SK-N-SH (cell line): ENCODE measurements at regions of chr15 and their contacts with region 1.

Region 1: GRCh38 chr15:38563723-38564519 is 693 bp downstream of the RASGRP1 start:
- DNase-seq: peak; percentile 85
- H3K4me3 ChIP-seq: peak overlapping the region; percentile 56 to 63
- H3K27ac ChIP-seq: no peak overlapping the region
- H3K4me1 ChIP-seq: peaks cover 0 to 16% of the 10 kb centered on the region in 2 experiments; a peak in 1 of 4 replicates
- H3K27me3 ChIP-seq: peaks cover 6% of the 10 kb centered on the region; the same call in 1 of the 2 replicates
- CTCF ChIP-seq: peak; percentile 87
- EP300 ChIP-seq: no peak
- RAD21 ChIP-seq: peak; percentile 51

Region 2: DNA sequence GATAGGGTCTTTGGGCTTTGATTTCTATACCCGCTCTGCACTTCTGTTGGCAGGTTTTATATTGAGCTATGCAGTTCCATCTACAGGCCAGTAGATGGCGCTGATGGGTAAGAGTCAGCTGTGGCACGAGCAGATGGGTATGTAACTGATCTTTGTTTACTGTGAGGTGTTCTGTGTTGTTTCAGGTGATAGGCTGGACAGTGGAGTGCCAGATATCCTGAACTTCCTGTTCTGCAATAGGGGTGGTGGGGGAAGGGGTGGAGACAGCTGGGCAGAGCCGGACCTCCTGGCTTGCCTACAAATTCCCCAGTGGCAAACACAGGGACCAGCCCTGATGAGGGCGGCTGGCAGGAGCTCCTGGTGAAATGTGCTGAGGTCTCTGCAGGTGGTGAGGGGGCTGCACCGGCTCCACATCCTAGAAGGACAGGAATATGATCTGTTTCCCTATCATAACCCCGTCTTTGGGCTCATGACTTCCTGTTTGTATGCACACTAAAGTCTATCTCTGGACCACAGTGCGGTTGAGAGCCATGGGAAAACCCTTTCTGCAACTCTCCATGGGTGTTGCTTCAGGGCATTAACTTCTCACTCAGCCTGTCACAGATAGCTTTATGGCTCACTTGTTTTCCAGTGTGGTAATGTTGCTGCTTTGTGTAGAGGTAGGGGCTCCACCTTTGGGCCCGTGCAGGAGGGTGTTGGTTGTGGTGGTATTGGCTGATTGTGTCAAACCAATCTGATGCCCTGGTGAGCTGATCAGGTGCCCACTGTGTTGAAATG is 123.4 kb before region 1 on chr15:
- CTCF ChIA-PET with region 1: interaction called, 16 read pairs
- POLR2A ChIA-PET with region 1: no interaction called
- DNase-seq: peak; percentile 58
- H3K4me3 ChIP-seq: no peak overlapping the region; a peak in 1 of 4 replicates
- H3K27ac ChIP-seq: no peak overlapping the region; a peak in 1 of 4 replicates
- H3K4me1 ChIP-seq: peaks cover 0 to 7% of the 10 kb centered on the region in 2 experiments; a peak in 1 of 4 replicates
- H3K27me3 ChIP-seq: 0 out of 2 replicates have a peak, but pooled peaks cover 9% of the 10 kb centered on the region
- CTCF ChIP-seq: peak; percentile 94
- EP300 ChIP-seq: no peak
- RAD21 ChIP-seq: peak; percentile 88

Region 3: DNA sequence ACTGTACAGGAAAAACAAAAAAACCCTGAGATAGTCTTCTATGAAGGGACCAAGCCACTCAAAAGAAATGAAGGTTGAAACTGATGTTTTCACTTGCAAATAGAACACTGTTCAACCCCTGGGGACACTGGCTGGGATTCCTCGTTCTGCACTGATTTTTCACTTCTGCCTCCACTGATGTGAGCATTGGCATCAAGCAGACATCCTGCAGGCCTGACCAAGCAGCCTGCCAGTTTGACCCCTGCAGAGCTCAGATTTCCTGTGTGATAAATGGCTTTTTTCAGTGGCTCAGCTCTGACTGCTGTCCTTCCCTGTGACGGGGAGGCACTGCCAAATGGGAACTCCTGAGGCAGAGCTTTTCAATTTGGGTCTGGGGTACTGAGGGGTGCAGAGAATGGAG is 49.3 kb before region 1 on chr15:
- CTCF ChIA-PET with region 1: interaction called, 18 read pairs
- POLR2A ChIA-PET with region 1: no interaction called
- DNase-seq: peak; percentile 50
- H3K4me3 ChIP-seq: no peak overlapping the region
- H3K27ac ChIP-seq: peak overlapping the region in 1 of 2 experiments; percentile 82; a peak in 2 of 4 replicates
- H3K4me1 ChIP-seq: peaks cover 10 to 20% of the 10 kb centered on the region in 2 experiments; a peak in 3 of 4 replicates
- H3K27me3 ChIP-seq: no peaks in the 10 kb centered on the region
- CTCF ChIP-seq: no peak
- EP300 ChIP-seq: peak in 1 of 2 experiments; percentile 48; a peak in 2 of 4 replicates
- RAD21 ChIP-seq: peak; percentile 9; the same call in 1 of the 2 replicates

Region 4: DNA sequence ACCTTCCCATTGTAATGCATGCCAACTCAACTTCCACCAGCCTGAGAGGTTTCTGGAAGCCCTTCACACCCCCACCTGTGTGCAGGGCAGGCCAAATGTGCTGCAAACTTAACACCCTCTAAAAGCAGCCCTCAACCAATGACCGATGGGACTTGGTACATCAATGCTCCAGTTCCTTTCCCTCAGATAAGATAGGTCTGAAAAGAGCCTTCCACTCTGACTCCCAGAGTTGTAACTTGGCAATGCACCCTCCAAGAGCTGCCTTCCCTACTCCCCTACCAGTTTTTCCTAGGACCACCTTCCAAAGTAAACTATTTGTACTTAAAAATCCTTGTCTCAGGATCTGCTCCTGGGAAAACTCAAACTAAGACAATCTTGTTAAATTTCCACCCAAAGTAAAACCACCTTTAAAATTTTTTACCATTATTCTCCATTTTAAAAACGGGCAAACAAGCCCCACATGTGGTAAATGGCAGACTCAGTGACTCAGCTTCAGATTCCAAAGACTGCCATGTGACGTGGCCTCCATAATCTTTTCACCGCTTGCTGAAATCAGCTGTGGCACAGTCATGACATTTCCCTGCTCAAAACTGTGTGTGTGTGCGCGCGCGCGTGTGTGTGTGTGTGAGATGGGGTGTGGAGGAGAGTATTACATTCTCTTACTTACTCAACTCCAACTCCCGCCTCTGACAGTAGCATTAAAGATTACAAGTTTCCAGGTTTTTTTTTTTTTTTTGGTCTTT is 16.5 kb before region 1 on chr15:
- CTCF ChIA-PET with region 1: interaction called, 53 read pairs
- POLR2A ChIA-PET with region 1: no interaction called
- DNase-seq: no peak
- H3K4me3 ChIP-seq: no peak overlapping the region
- H3K27ac ChIP-seq: no peak overlapping the region
- H3K4me1 ChIP-seq: no peaks in the 10 kb centered on the region
- H3K27me3 ChIP-seq: no peaks in the 10 kb centered on the region
- CTCF ChIP-seq: no peak
- EP300 ChIP-seq: no peak
- RAD21 ChIP-seq: no peak

Region 5: DNA sequence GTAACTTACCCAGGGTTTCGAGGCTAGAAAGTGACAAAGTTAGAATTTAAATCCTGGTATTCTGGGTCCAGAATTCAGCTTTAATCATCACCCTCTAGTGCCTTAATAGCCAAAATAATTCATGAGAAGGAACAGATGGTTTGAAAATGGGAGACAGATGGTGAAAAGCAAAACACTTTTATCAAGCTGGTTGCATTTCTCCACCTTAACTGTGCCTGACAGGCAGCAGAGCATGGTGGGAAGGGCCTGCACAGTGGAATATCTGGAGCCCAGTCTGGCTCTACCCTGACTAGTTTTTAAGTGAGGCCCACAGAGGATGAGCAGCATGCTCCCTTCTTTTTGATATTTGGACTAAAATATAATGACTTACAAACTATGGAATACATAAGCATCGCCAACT is 36.3 kb after region 1 on chr15:
- CTCF ChIA-PET with region 1: interaction called, 12 read pairs
- POLR2A ChIA-PET with region 1: no interaction called
- DNase-seq: no peak
- H3K4me3 ChIP-seq: no peak overlapping the region
- H3K27ac ChIP-seq: no peak overlapping the region
- H3K4me1 ChIP-seq: no peaks in the 10 kb centered on the region
- H3K27me3 ChIP-seq: peaks cover 14% of the 10 kb centered on the region; the same call in 1 of the 2 replicates
- CTCF ChIP-seq: no peak
- EP300 ChIP-seq: no peak
- RAD21 ChIP-seq: no peak

Region 6: GRCh38 chr15:38683382-38684242 is 119.7 kb after region 1 on chr15:
- CTCF ChIA-PET with region 1: interaction called, 51 read pairs
- POLR2A ChIA-PET with region 1: no interaction called
- DNase-seq: peak; percentile 43
- H3K4me3 ChIP-seq: no peak overlapping the region; a peak in 1 of 4 replicates
- H3K27ac ChIP-seq: no peak overlapping the region
- H3K4me1 ChIP-seq: peaks cover 0 to 12% of the 10 kb centered on the region in 2 experiments; a peak in 2 of 4 replicates
- H3K27me3 ChIP-seq: no peaks in the 10 kb centered on the region
- CTCF ChIP-seq: peak; percentile 85
- EP300 ChIP-seq: no peak
- RAD21 ChIP-seq: peak; percentile 92

Region 7: GRCh38 chr15:38843736-38844590 is 280.0 kb after region 1 on chr15:
- CTCF ChIA-PET with region 1: no interaction called
- POLR2A ChIA-PET with region 1: no interaction called
- DNase-seq: no peak
- H3K4me3 ChIP-seq: no peak overlapping the region
- H3K27ac ChIP-seq: peak overlapping the region; percentile 75 to 83
- H3K4me1 ChIP-seq: peaks cover 3 to 42% of the 10 kb centered on the region in 2 experiments; a peak in 3 of 4 replicates
- H3K27me3 ChIP-seq: no peaks in the 10 kb centered on the region
- CTCF ChIP-seq: no peak
- EP300 ChIP-seq: peak; percentile 59 to 87; a peak in 3 of 4 replicates
- RAD21 ChIP-seq: no peak